Activated naive CD4-positive, alpha-beta T cell treated with anti-CD3 and anti-CD28 coated beads for 36 hours (primary cell): ENCODE measurements at regions of chr14 and their contacts with region 1.

Region 1: GRCh38 chr14:58275527-58276190 is 22.7 kb upstream of the ARID4A start:
- DNase-seq: no peak
- H3K4me3 Mint-ChIP-seq: no peak overlapping the region
- H3K27ac Mint-ChIP-seq: peak overlapping the region; percentile 84
- H3K4me1 Mint-ChIP-seq: peaks cover 52% of the 10 kb centered on the region
- H3K27me3 Mint-ChIP-seq: no peaks in the 10 kb centered on the region

Region 2: GRCh38 chr14:57725399-57726077 is 550.1 kb before region 1 on chr14:
- CTCF ChIA-PET with region 1: no interaction called
- intact Hi-C with region 1: no loop called
- DNase-seq: no peak
- H3K4me3 Mint-ChIP-seq: no peak overlapping the region
- H3K27ac Mint-ChIP-seq: no peak overlapping the region
- H3K4me1 Mint-ChIP-seq: no peaks in the 10 kb centered on the region
- H3K27me3 Mint-ChIP-seq: no peaks in the 10 kb centered on the region

Region 3: GRCh38 chr14:58060898-58061297 is 214.8 kb before region 1 on chr14:
- CTCF ChIA-PET with region 1: no interaction called
- intact Hi-C with region 1: no loop called
- DNase-seq: no peak
- H3K4me3 Mint-ChIP-seq: no peak overlapping the region
- H3K27ac Mint-ChIP-seq: no peak overlapping the region
- H3K4me1 Mint-ChIP-seq: no peaks in the 10 kb centered on the region
- H3K27me3 Mint-ChIP-seq: peaks cover 3% of the 10 kb centered on the region

Region 4: DNA sequence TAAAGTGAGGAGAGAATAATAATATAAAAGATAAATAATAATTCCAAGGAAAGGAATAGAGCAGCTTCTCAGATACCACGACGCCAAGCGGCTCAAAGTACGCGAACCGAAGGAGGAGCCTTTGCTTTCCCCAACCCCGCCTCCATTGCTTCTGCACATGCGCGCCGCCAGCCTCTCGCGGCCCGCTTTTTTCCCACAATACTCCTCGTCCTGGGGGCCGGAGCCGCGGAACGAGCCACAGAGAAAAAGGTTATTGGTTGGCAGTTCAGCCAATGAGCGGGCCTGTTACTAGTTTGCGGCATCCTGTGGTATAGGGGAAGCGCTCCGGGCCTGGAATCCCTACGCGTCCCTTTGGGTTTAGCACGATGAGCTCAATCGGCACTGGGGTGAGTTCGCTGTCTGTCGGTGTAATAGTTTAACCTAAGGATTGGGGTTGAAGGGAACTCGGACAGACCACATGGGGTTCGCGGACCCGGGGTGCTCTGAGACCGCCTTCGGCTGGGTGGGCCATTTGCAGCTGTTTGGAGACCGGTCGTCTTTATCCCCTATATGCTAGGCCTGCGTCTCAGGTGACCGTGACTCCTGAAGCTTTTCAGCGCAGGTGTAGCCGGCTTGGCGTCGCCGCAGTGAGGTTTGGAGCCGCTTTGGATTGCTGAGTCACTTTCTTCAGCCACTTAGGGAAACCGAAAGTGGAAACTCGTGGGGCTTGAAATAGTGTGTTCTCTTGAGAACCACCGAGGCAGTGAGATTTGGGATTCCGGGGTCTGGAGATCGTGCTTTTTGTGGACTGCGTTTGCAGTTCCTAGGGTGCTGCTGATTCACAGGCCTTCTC is 30.9 kb before region 1 on chr14 and contains the start of gene PSMA3:
- CTCF ChIA-PET with region 1: interaction called, 3 read pairs
- intact Hi-C with region 1: loop called (anchors 1 kb)
- DNase-seq: peak; percentile 99
- H3K4me3 Mint-ChIP-seq: peak within 1 kb of the TSS; percentile 98
- H3K27ac Mint-ChIP-seq: peak within 1 kb of the TSS; percentile 99
- H3K4me1 Mint-ChIP-seq: peaks cover 43% of the 10 kb centered on the region
- H3K27me3 Mint-ChIP-seq: no peaks in the 10 kb centered on the region
- total RNA-seq, gene PSMA3: 399 to 424 TPM

Region 5: DNA sequence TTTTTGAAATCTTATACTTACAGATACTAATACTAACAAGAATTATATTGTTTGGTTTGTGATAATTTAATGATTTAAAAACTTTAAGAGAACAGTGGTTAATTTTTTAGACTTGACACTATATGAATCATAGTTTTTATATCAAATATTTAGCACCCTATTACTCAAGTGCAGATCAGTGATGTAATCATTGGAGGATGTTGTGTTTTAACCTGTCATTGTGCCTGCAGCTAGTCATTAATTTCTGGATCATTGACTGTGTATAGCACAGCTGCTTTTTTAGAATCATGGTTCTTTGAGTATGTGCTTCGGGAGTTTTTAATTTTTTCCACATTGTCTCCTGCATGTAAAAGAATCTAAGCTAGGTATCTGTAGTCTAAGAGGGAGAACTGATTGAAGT is 39.9 kb after region 1 on chr14:
- CTCF ChIA-PET with region 1: no interaction called
- intact Hi-C with region 1: no loop called
- DNase-seq: no peak
- H3K4me3 Mint-ChIP-seq: no peak overlapping the region
- H3K27ac Mint-ChIP-seq: peak overlapping the region; percentile 33
- H3K4me1 Mint-ChIP-seq: peaks cover 3% of the 10 kb centered on the region
- H3K27me3 Mint-ChIP-seq: no peaks in the 10 kb centered on the region